Heart left ventricle (tissue), 16 donors: ENCODE measurements at regions of chr11 and their contacts with region 1.

Region 1: GRCh38 chr11:18115360-18116127 is 9.7 kb upstream of the SAAL1 start:
- DNase-seq: peak in 4 of 5 donors; percentile 20 to 49 (median 30)
- ATAC-seq: peak; percentile 26 to 86 (median 80)
- H3K4me3 ChIP-seq: no peak overlapping the region
- H3K27ac ChIP-seq: no peak overlapping the region
- H3K4me1 ChIP-seq: no peaks in the 10 kb centered on the region
- H3K27me3 ChIP-seq: peaks cover 0 to 23% (median 5%) of the 10 kb centered on the region in 9 donors
- CTCF ChIP-seq: peak; percentile 70 to 91 (median 84)
- POLR2A ChIP-seq: no peak

Region 2: DNA sequence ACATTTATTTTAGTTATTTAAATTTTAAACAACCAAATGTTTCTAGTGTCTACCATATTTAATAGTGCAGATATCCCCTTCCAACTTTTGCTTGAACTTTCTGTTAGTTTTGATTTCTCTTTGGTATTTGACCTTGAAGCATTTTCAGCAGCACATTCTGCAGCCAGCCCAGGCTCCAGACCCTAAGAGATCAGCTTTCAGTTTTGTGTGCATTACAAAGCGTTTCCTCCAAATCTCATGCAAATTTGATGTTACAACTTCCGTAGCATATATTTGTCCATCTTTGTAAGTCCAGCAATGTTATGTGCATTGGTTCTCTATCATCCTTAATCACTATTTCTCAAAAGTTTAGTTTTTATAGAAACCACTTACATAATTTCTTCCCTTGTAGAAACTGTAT is 88.1 kb before region 1 on chr11:
- intact Hi-C with region 1: no loop called
- DNase-seq: no peak
- ATAC-seq: no peak
- H3K4me3 ChIP-seq: no peak overlapping the region
- H3K27ac ChIP-seq: no peak overlapping the region
- H3K4me1 ChIP-seq: no peaks in the 10 kb centered on the region
- H3K27me3 ChIP-seq: no peaks in the 10 kb centered on the region
- CTCF ChIP-seq: no peak
- POLR2A ChIP-seq: no peak

Region 3: DNA sequence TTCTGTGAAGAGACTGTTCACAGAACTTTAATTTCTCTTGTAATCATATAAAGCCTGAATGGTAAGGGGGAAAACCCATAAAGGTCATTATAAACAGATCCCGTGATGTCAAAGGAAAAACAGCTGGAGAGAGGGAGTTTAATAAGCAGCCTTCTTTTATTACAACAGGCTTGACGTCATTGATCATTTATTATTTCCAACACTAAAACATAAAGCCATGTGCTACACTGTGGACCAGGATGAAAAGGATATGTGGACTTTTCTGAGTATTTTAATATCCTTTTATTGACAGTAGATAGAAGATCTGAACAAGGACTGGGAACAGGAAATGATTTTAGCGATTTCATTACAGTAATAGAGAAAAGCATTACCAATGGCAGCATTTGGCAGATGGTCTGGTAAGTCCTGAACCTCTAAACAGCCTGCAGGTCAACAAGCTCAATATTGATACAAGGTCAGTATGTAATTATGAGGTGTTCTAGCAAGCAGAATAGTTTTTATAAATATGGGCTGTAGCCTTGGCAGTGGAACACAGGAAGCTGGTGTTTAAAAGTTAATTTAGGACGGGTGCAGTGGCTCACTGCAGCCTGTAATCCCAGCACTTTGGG is 44.3 kb before region 1 on chr11:
- intact Hi-C with region 1: no loop called
- DNase-seq: no peak
- ATAC-seq: no peak
- H3K4me3 ChIP-seq: no peak overlapping the region
- H3K27ac ChIP-seq: no peak overlapping the region
- H3K4me1 ChIP-seq: no peaks in the 10 kb centered on the region
- H3K27me3 ChIP-seq: no peaks in the 10 kb centered on the region
- CTCF ChIP-seq: no peak
- POLR2A ChIP-seq: no peak

Region 4: DNA sequence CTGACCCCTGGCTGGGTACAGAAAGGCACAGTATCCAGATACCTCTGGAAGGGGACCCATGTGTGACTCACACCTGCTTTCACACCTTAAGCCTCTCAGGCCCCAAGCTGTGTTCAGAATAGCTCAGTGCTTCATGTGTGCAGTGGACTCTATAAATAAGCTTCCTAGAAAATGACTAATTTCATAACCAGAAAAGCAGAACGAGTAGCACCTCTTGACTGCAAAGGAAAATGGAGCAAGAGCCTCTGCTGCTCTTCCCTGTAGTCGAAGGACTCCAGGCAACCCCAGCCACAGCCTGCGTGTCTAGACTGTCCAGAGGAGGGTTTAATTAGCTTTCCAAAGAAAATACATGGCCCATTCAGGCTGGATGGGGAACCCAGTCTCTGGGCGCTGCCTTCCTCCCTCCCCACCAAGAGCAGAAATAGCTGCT is 652.9 kb after region 1 on chr11:
- intact Hi-C with region 1: loop called in 1 of 10 experiments (anchors 10 kb)
- DNase-seq: no peak
- ATAC-seq: peak in 3 of 4 donors; percentile 46 to 65 (median 51)
- H3K4me3 ChIP-seq: no peak overlapping the region
- H3K27ac ChIP-seq: no peak overlapping the region
- H3K4me1 ChIP-seq: peaks cover 0 to 15% (median 0%) of the 10 kb centered on the region in 12 donors
- H3K27me3 ChIP-seq: no peaks in the 10 kb centered on the region
- CTCF ChIP-seq: no peak
- POLR2A ChIP-seq: no peak

Region 5: DNA sequence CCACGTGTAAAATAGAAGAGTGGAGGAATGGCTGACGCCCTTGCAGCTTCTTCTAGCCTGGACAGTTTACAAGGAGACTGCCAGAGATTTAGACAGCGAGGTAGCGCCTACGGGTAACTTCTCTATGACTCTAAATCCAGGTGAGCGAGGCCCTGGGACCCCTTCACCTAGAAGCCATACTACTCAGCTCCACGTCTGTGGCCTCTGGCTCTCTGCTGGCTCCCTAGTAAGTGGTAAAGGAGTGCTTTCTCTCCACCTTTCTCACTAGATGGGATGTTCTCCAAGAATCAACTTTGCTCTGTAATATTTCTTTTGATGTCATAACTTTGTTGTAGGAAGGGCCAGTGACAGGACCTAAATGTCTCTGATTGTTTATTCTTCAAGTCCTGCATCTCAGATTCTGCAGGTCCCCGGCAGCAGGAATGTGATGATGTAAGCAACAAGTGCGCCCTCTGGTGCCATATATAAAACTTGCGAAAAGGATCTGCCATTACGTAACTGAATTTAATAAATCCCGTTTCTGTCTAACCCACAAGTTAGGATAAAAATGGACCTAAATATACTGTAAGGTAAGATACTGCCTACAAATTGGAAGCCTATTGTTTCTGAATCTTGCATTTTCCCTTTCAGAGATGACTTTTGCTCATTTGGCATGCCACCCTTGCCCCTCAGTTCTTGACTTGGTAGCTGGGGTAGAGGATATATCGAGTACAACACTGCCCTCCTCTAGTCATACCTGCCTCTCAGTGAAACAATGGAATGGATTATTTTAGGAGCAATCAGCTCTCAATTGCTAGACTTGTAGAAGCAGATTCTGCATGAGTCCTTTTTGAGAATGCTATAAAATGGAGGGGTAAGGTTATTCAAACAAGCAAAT is 687.1 kb after region 1 on chr11:
- intact Hi-C with region 1: loop called in 3 of 10 experiments (anchors 2 to 10 kb)
- DNase-seq: peak in 3 of 5 donors; percentile 31 to 49 (median 35)
- ATAC-seq: peak in 1 of 4 donors; percentile 33
- H3K4me3 ChIP-seq: no peak overlapping the region
- H3K27ac ChIP-seq: no peak overlapping the region
- H3K4me1 ChIP-seq: no peaks in the 10 kb centered on the region
- H3K27me3 ChIP-seq: peaks cover 0 to 5% (median 0%) of the 10 kb centered on the region in 9 donors
- CTCF ChIP-seq: peak; percentile 22 to 70 (median 55)
- POLR2A ChIP-seq: no peak